HCT116 (cell line): ENCODE measurements at regions of chr22 and their contacts with region 1.

Region 1: GRCh38 chr22:43230971-43231723 is 44.2 kb upstream of the TTLL12 start:
- DNase-seq: peak; percentile 51
- ATAC-seq: peak; percentile 83
- H3K4me3 ChIP-seq: no peak overlapping the region
- H3K27ac ChIP-seq: no peak overlapping the region
- H3K4me1 ChIP-seq: peaks cover 0 to 7% of the 10 kb centered on the region in 2 experiments; a peak in 1 of 4 replicates
- H3K27me3 ChIP-seq: no peaks in the 10 kb centered on the region
- CTCF ChIP-seq: peak; percentile 95 to 98 (median 97)
- POLR2A ChIP-seq: no peak
- RAD21 ChIP-seq: peak; percentile 90

Region 2: DNA sequence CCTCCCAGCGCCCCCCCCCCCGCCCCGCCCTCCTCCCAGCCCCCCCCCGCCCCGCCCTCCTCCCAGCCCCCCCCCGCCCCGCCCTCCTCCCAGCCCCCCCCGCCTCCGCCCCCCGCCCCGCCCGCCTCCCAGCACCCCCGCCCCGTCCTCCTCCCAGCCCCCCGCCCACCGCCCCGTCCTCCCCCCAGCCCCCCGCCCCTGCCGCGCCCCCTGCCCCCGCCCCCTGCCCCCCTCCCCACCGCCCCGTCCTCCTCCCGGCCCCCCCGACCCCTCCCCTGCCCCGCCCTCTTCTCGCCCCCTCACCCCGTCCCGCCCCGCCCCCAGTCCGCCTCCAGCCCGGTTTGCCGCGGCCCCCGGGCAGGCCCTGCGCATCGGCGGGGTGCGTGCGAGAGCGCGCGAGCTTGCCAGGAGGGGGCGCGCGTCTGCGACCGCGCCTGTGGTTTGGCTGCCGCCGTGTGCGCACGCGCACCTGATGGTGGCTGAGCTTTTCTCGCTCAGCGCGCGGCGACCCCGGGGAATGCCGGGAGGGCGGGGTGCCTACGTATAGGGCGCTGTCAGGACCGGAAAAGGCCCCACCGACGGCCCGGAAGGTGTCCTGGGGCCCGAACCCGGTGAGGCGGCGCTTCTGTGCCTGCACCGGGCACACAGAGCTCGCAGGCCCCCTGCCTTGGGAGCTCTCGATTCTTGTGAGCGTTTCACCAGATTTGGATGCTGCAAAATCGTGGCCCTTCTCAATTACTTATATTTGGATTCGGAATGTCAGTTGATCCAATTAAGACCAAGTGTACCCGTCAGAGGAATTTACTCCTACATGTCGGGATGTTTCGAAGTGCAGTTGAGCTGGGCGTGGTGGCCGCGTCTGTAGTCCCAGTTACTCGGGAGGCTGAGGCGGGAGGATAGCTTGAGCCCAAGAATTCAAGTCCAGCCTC is 43.7 kb before region 1 on chr22:
- CTCF ChIA-PET with region 1: interaction called, 11 read pairs
- POLR2A ChIA-PET with region 1: interaction called, 3 read pairs
- RAD21 ChIA-PET with region 1: interaction called in 1 of 2 experiments, 4 read pairs
- intact Hi-C with region 1: no loop called
- DNase-seq: peak; percentile 90
- ATAC-seq: peak; percentile 89
- H3K4me3 ChIP-seq: peak overlapping the region; percentile 73 to 83
- H3K27ac ChIP-seq: peak overlapping the region; percentile 64
- H3K4me1 ChIP-seq: peaks cover 9 to 36% of the 10 kb centered on the region in 2 experiments; a peak in 3 of 4 replicates
- H3K27me3 ChIP-seq: no peaks in the 10 kb centered on the region
- CTCF ChIP-seq: peak; percentile 32 to 65 (median 45); a peak in 5 of 6 replicates
- POLR2A ChIP-seq: peak; percentile 95
- RAD21 ChIP-seq: no peak; the same call in 1 of the 2 replicates

Region 3: DNA sequence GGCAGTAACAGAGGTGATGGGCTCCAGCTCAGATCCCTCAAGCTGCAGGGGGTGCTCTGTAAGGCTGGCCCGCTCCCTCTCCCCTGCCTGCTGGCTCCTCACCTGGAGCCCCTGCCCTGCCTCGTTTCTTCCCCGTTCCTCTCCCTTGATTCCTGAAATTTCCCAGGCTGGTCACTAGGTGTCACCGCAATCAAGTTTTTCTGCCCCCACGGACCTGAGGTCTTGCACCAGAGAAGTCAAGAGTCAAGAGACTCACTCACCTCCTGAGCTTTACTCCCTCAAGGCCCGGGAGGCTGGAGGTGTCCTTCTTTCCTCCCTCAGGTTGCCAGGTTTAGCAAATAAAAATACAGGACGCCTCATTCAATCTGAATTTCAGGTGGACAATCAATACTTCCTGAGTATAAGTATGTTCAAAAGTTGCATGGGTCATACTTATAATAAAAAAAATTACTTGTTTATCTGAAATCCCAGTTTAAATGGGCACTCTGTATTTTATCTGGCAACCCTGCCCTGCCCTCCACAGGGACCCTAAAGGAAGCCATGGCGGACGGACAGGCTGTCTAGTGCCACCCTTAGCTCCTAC is 42.8 kb after region 1 on chr22:
- CTCF ChIA-PET with region 1: interaction called, 15 read pairs
- POLR2A ChIA-PET with region 1: no interaction called
- RAD21 ChIA-PET with region 1: interaction called, 3 to 6 read pairs
- intact Hi-C with region 1: loop called (anchors 2 kb)
- DNase-seq: peak; percentile 47
- ATAC-seq: peak; percentile 81
- H3K4me3 ChIP-seq: no peak overlapping the region
- H3K27ac ChIP-seq: no peak overlapping the region
- H3K4me1 ChIP-seq: peaks cover 18 to 39% of the 10 kb centered on the region in 2 experiments
- H3K27me3 ChIP-seq: no peaks in the 10 kb centered on the region
- CTCF ChIP-seq: peak; percentile 70 to 81 (median 76)
- POLR2A ChIP-seq: no peak
- RAD21 ChIP-seq: peak; percentile 88

Region 4: DNA sequence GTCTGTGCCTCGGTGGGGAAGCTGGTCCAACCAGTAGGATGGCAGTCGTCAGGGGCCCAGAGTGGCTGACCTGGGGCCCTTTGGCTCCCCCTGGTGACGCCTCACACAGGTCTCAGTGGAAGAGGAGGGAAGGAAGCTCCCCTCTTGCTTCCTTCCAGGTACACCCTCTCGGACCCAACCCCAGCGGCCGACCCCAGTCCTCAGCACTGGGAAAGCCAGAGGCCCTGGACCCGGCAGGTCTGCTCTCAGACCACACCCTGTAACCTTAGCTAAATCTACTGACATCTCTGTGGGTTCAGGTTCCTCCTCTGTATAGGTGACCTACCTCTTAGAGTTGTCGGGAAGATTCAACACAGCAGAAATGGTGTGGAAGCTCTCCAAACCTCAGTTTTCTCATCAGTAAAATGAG is 115.4 kb after region 1 on chr22:
- CTCF ChIA-PET with region 1: interaction called, 66 read pairs
- POLR2A ChIA-PET with region 1: no interaction called
- RAD21 ChIA-PET with region 1: interaction called, 9 to 12 read pairs
- intact Hi-C with region 1: loop called (anchors 1 kb)
- DNase-seq: peak; percentile 42
- ATAC-seq: peak; percentile 90
- H3K4me3 ChIP-seq: no peak overlapping the region
- H3K27ac ChIP-seq: no peak overlapping the region
- H3K4me1 ChIP-seq: peaks cover 0 to 15% of the 10 kb centered on the region in 2 experiments; a peak in 3 of 4 replicates
- H3K27me3 ChIP-seq: no peaks in the 10 kb centered on the region
- CTCF ChIP-seq: peak; percentile 68 to 88 (median 70); a peak in 5 of 6 replicates
- POLR2A ChIP-seq: no peak
- RAD21 ChIP-seq: peak; percentile 76

Region 5: GRCh38 chr22:43412808-43413795 is 182.0 kb after region 1 on chr22:
- CTCF ChIA-PET with region 1: no interaction called
- POLR2A ChIA-PET with region 1: no interaction called
- RAD21 ChIA-PET with region 1: no interaction called
- intact Hi-C with region 1: no loop called
- DNase-seq: no peak
- ATAC-seq: no peak
- H3K4me3 ChIP-seq: no peak overlapping the region
- H3K27ac ChIP-seq: no peak overlapping the region
- H3K4me1 ChIP-seq: no peaks in the 10 kb centered on the region
- H3K27me3 ChIP-seq: peaks cover 41% of the 10 kb centered on the region
- CTCF ChIP-seq: no peak
- POLR2A ChIP-seq: no peak
- RAD21 ChIP-seq: no peak